GM12878 (cell line): ENCODE measurements at regions of chr2 and their contacts with region 1.

Region 1: GRCh38 chr2:64945973-64946768 is 43.0 kb upstream of the SLC1A4 start:
- DNase-seq: peak; percentile 79
- ATAC-seq: peak; percentile 96
- H3K4me3 ChIP-seq: peak overlapping the region; percentile 35
- H3K27ac ChIP-seq: peak overlapping the region; percentile 91
- H3K4me1 ChIP-seq: peaks cover 48% of the 10 kb centered on the region
- H3K27me3 ChIP-seq: no peaks in the 10 kb centered on the region
- CTCF ChIP-seq: no peak
- EP300 ChIP-seq: peak; percentile 93 to 97
- POLR2A ChIP-seq: peak; percentile 96
- RAD21 ChIP-seq: peak; percentile 1; the same call in 1 of the 2 replicates

Region 2: GRCh38 chr2:64922482-64923384 is 23.4 kb before region 1 on chr2:
- CTCF ChIA-PET with region 1: interaction called, 413 read pairs
- POLR2A ChIA-PET with region 1: interaction called, 377 read pairs
- RAD21 ChIA-PET with region 1: interaction called, 389 read pairs
- SMC1A ChIA-PET with region 1: interaction called, 395 read pairs
- in situ Hi-C with region 1: no loop called
- intact Hi-C with region 1: no loop called
- DNase-seq: no peak
- ATAC-seq: no peak
- H3K4me3 ChIP-seq: peak overlapping the region; percentile 23; the same call in 1 of the 2 replicates
- H3K27ac ChIP-seq: peak overlapping the region; percentile 23; the same call in 1 of the 2 replicates
- H3K4me1 ChIP-seq: peaks cover 42% of the 10 kb centered on the region
- H3K27me3 ChIP-seq: no peaks in the 10 kb centered on the region
- CTCF ChIP-seq: no peak
- EP300 ChIP-seq: no peak
- POLR2A ChIP-seq: no peak
- RAD21 ChIP-seq: peak; percentile 30; the same call in 1 of the 2 replicates

Region 3: GRCh38 chr2:64932371-64933216 is 13.6 kb before region 1 on chr2:
- CTCF ChIA-PET with region 1: interaction called, 31 read pairs
- POLR2A ChIA-PET with region 1: interaction called, 377 read pairs
- RAD21 ChIA-PET with region 1: interaction called, 75 read pairs
- SMC1A ChIA-PET with region 1: interaction called, 107 read pairs
- in situ Hi-C with region 1: no loop called
- intact Hi-C with region 1: no loop called
- DNase-seq: peak; percentile 98
- ATAC-seq: peak; percentile 81
- H3K4me3 ChIP-seq: peak overlapping the region; percentile 96
- H3K27ac ChIP-seq: peak overlapping the region; percentile 95
- H3K4me1 ChIP-seq: peaks cover 28% of the 10 kb centered on the region
- H3K27me3 ChIP-seq: no peaks in the 10 kb centered on the region
- CTCF ChIP-seq: no peak
- EP300 ChIP-seq: peak; percentile 62 to 83; a peak in 3 of 4 replicates
- POLR2A ChIP-seq: peak; percentile 84
- RAD21 ChIP-seq: 0 out of 2 replicates have a peak, but pooled peaks have one; percentile 1

Region 4: DNA sequence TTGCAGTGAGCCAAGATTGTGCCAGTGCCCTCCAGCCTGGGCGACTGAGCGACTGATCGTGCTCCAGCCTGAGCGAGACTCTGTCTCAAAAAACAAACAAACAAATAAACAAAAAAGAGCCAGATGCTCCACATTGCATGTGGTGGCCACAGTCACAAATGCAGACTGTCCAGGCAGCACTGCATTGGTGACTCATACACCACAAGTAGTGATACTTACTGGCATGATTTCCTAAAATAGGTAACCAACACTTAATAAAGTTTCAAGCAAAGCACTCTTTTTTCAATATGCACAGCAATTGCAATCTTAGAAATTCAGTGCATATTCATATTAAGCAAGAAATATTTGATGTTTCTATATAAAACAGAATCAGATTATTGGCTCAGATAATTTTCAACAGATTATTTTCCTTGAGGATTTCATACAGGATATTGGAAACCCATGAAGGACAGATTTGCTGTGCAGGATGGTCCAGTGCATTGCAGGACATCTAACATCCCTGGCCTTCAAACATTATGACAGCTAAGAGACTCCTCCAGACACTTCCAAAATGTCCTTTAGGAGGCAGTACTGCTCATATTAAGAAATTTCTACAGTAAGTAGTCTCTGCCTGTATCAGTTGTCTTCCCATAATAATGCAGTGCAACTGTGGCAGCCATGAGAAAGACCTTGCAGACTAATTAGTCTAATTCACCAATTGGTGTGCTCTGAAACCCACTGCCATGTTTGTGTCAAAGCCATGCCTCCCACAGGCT is 32.5 kb after region 1 on chr2:
- CTCF ChIA-PET with region 1: interaction called, 3 read pairs
- POLR2A ChIA-PET with region 1: interaction called, 6 read pairs
- RAD21 ChIA-PET with region 1: interaction called, 14 read pairs
- SMC1A ChIA-PET with region 1: interaction called, 7 read pairs
- in situ Hi-C with region 1: no loop called
- intact Hi-C with region 1: loop called (anchors 2 kb)
- DNase-seq: no peak
- ATAC-seq: peak; percentile 71
- H3K4me3 ChIP-seq: no peak overlapping the region
- H3K27ac ChIP-seq: no peak overlapping the region
- H3K4me1 ChIP-seq: peaks cover 25% of the 10 kb centered on the region
- H3K27me3 ChIP-seq: no peaks in the 10 kb centered on the region
- CTCF ChIP-seq: peak; percentile 29 to 36 (median 31); a peak in 4 of 6 replicates
- EP300 ChIP-seq: no peak
- POLR2A ChIP-seq: no peak
- RAD21 ChIP-seq: peak; percentile 36

Region 5: GRCh38 chr2:64988420-64989125 is 42.4 kb after region 1 on chr2:
- CTCF ChIA-PET with region 1: interaction called, 10 read pairs
- POLR2A ChIA-PET with region 1: interaction called, 96 read pairs
- RAD21 ChIA-PET with region 1: interaction called, 73 read pairs
- SMC1A ChIA-PET with region 1: interaction called, 13 read pairs
- in situ Hi-C with region 1: no loop called
- intact Hi-C with region 1: loop called (anchors 2 kb)
- DNase-seq: no peak
- ATAC-seq: peak; percentile 46
- H3K4me3 ChIP-seq: peak overlapping the region; percentile 99
- H3K27ac ChIP-seq: peak overlapping the region; percentile 89
- H3K4me1 ChIP-seq: peaks cover 28% of the 10 kb centered on the region
- H3K27me3 ChIP-seq: no peaks in the 10 kb centered on the region
- CTCF ChIP-seq: peak; percentile 18 to 33 (median 20); a peak in 3 of 6 replicates
- EP300 ChIP-seq: peak; percentile 53 to 84; a peak in 3 of 4 replicates
- POLR2A ChIP-seq: peak; percentile 59
- RAD21 ChIP-seq: no peak

Region 6: DNA sequence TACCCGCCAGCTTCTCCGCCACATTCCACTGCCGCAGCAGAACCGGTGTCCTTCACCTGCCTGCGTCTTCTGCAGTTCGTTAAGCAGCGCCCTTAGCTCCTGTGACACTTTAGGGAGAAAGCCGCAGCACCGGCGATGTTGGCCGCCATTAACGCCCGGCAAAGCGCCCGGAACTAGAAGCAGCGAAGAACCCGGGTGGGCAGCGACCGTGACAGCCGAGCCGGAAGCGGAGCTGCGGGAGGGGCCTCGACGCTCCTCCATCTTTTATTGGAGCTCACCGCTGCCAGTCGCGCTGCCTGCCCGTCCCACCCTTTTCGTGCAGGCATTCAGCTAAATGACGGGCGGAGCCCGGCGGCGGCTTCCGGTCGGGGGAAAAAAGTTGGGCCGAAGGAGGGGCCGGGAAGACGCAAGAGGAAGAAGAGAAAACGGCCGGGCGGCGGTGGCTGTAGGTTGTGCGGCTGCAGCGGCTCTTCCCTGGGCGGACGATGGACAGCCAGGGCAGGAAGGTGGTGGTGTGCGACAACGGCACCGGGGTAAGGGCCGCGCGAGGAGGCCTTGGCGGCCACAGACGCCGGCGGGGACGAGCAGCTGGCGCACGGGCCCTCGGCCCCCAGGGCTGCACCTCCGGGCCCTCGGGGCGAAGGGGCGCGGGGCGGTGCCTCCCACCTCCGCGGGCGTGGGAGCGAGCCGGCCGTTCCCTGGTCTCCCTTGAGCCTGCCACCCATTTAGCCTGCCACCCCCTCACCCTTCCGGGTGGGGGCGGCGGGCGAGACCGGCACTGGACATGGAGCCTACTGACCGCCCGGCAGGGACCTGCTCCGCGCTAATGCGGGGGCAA is 281.5 kb after region 1 on chr2 and contains the start of gene ACTR2:
- CTCF ChIA-PET with region 1: no interaction called
- POLR2A ChIA-PET with region 1: interaction called, 10 read pairs
- RAD21 ChIA-PET with region 1: no interaction called
- SMC1A ChIA-PET with region 1: no interaction called
- in situ Hi-C with region 1: no loop called
- intact Hi-C with region 1: no loop called
- DNase-seq: peak; percentile 90
- ATAC-seq: peak; percentile 92
- H3K4me3 ChIP-seq: peak within 1 kb of the TSS; percentile 97
- H3K27ac ChIP-seq: peak within 1 kb of the TSS; percentile 98
- H3K4me1 ChIP-seq: peaks cover 12% of the 10 kb centered on the region
- H3K27me3 ChIP-seq: no peaks in the 10 kb centered on the region
- CTCF ChIP-seq: no peak
- EP300 ChIP-seq: 0 out of 4 replicates have a peak, but pooled peaks of 1 of the 2 experiments have one; percentile 22
- POLR2A ChIP-seq: peak; percentile 98
- RAD21 ChIP-seq: no peak
- polyA plus RNA-seq, gene ACTR2: 94.2 to 124 TPM

Region 7: DNA sequence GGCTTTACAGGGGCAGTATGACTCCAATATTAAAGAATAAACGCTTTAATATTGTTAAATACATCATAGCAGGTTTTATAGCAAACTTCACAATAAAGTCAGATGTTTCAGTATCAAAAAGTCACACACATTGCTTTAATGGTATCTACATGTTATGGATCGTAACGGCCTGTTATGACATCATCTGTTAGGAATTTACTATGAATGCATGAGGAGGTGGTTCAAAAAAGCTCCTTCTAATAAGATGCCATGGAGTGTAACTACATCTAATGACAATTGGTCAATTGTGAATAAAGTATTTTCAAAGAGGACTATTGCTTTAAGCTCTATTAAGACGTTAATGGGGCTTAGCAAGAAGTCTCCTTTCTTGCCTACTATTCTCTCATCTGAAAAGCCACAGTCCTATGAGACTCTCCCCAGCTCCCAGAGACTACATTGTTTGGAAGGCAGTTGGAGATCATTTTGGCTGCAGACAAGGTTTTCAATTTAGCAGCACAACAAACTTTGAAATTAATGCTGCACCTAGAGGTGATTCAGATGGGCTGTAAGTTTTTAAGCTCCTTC is 1188.0 kb after region 1 on chr2:
- CTCF ChIA-PET with region 1: no interaction called
- POLR2A ChIA-PET with region 1: no interaction called
- RAD21 ChIA-PET with region 1: no interaction called
- SMC1A ChIA-PET with region 1: no interaction called
- in situ Hi-C with region 1: no loop called
- intact Hi-C with region 1: no loop called
- DNase-seq: no peak
- ATAC-seq: no peak
- H3K4me3 ChIP-seq: no peak overlapping the region
- H3K27ac ChIP-seq: no peak overlapping the region
- H3K4me1 ChIP-seq: no peaks in the 10 kb centered on the region
- H3K27me3 ChIP-seq: no peaks in the 10 kb centered on the region
- CTCF ChIP-seq: no peak
- EP300 ChIP-seq: no peak
- POLR2A ChIP-seq: no peak
- RAD21 ChIP-seq: no peak